ENCODE measurements at regions of chr7 and their contacts with region 1.

Region 1: DNA sequence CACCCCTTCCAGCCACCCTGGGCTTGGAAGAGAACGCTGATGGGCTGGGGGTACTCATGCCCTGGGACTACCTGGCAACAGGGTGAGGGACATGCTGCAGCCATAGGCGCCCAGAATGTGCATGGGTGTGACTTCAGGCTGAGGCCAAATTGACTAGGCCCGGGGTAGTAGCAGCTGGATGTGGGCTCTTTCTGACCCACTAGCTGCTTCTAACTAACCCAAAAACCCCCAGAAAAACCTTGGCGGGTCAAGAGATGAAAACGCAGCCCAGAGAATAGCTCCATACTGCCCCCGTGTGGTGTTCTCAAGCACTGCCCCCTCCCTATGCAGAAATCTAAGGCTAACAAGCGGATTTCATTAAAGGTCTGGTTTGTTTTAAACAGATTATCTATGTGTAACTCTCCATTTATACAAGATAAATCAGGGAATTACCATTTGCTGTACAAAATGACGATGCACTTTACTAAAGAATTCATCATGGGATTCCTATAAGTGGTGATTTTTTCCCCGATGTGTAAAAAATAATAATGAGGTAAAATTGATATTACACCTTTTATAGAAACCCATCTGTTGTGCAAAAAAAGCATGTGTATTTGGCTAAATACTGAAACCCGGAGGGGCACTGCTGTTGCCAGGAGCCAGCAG is 4.2 kb downstream of the SMARCD3 start:
- DNase-seq: peak; percentile 15
- ATAC-seq: peak; percentile 69
- H3K4me3 ChIP-seq: no peak overlapping the region; the same call in 1 of the 2 replicates
- H3K27ac ChIP-seq: no peak overlapping the region
- H3K4me1 ChIP-seq: peaks cover 16% of the 10 kb centered on the region
- H3K27me3 ChIP-seq: peaks cover 15 to 24% of the 10 kb centered on the region in 2 experiments
- CTCF ChIP-seq: peak; percentile 65 to 92 (median 90)
- EP300 ChIP-seq: no peak
- POLR2A ChIP-seq: no peak
- RAD21 ChIP-seq: peak; percentile 68

Region 2: GRCh38 chr7:151123822-151124464 is 120.4 kb before region 1 on chr7:
- CTCF ChIA-PET with region 1: interaction called, 41 read pairs
- POLR2A ChIA-PET with region 1: no interaction called
- RAD21 ChIA-PET with region 1: interaction called, 16 read pairs
- SMC1A ChIA-PET with region 1: interaction called, 10 read pairs
- in situ Hi-C with region 1: no loop called
- intact Hi-C with region 1: loop called (anchors 1 kb)
- DNase-seq: no peak
- ATAC-seq: peak; percentile 99
- H3K4me3 ChIP-seq: no peak overlapping the region
- H3K27ac ChIP-seq: no peak overlapping the region
- H3K4me1 ChIP-seq: no peaks in the 10 kb centered on the region
- H3K27me3 ChIP-seq: no peaks in the 10 kb centered on the region
- CTCF ChIP-seq: peak; percentile 99; a peak in 5 of 6 replicates
- EP300 ChIP-seq: no peak
- POLR2A ChIP-seq: no peak; the same call in 1 of the 2 replicates
- RAD21 ChIP-seq: peak; percentile 86

Region 3: DNA sequence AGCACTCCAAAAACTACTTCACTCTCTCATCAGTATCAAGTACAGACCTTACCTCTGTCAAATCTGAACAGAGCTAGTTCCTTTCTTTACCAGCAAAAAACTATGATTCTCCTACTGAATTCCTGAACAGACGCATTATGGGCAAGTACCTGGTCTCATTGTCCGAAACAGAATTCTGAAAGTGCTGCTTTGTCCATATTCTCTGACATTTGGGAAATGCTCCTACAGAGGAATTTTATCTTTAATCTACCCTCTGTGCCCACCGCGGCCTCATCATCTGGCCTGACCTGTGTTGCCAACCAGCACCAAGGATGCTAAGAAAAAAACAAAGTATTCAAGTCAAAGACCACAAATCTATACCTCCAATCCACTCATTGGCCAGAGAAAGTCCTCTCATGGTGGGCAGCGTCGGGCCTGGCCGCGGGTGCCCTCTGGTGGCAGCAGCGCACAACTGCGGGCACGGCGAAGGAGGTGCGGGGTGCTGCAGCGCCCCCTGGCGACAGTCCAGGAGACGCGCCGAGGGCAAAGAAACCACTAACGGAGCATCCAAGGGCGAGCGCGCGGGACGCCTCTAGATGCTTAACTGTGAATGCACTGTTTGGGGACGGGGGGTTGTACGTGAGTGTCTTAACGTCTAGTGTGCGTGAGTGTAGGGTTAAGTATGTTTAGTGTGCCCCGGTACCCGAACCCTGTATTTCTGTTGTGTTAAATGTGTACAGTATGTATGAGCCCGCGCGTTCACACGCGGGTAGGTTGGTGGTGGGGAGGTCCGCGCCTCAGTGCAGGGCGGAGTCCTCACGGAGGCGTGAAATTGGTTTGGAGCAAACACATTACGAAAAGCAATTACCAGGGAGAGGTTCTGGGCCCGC is 71.8 kb before region 1 on chr7:
- CTCF ChIA-PET with region 1: interaction called, 19 read pairs
- POLR2A ChIA-PET with region 1: no interaction called
- RAD21 ChIA-PET with region 1: no interaction called
- SMC1A ChIA-PET with region 1: interaction called, 3 read pairs
- in situ Hi-C with region 1: no loop called
- intact Hi-C with region 1: loop called (anchors 5 kb)
- DNase-seq: no peak
- ATAC-seq: peak; percentile 87
- H3K4me3 ChIP-seq: no peak overlapping the region
- H3K27ac ChIP-seq: no peak overlapping the region
- H3K4me1 ChIP-seq: no peaks in the 10 kb centered on the region
- H3K27me3 ChIP-seq: peaks cover 5 to 19% of the 10 kb centered on the region in 2 experiments
- CTCF ChIP-seq: peak; percentile 100; a peak in 5 of 6 replicates
- EP300 ChIP-seq: no peak
- POLR2A ChIP-seq: no peak
- RAD21 ChIP-seq: peak; percentile 75

Region 4: GRCh38 chr7:151218170-151218569 is 26.1 kb before region 1 on chr7:
- CTCF ChIA-PET with region 1: interaction called, 12 read pairs
- POLR2A ChIA-PET with region 1: no interaction called
- RAD21 ChIA-PET with region 1: no interaction called
- SMC1A ChIA-PET with region 1: interaction called, 5 read pairs
- in situ Hi-C with region 1: no loop called
- intact Hi-C with region 1: no loop called
- DNase-seq: no peak
- ATAC-seq: no peak
- H3K4me3 ChIP-seq: no peak overlapping the region
- H3K27ac ChIP-seq: no peak overlapping the region
- H3K4me1 ChIP-seq: no peaks in the 10 kb centered on the region
- H3K27me3 ChIP-seq: no peaks in the 10 kb centered on the region
- CTCF ChIP-seq: no peak
- EP300 ChIP-seq: no peak
- POLR2A ChIP-seq: no peak
- RAD21 ChIP-seq: no peak

Region 5: DNA sequence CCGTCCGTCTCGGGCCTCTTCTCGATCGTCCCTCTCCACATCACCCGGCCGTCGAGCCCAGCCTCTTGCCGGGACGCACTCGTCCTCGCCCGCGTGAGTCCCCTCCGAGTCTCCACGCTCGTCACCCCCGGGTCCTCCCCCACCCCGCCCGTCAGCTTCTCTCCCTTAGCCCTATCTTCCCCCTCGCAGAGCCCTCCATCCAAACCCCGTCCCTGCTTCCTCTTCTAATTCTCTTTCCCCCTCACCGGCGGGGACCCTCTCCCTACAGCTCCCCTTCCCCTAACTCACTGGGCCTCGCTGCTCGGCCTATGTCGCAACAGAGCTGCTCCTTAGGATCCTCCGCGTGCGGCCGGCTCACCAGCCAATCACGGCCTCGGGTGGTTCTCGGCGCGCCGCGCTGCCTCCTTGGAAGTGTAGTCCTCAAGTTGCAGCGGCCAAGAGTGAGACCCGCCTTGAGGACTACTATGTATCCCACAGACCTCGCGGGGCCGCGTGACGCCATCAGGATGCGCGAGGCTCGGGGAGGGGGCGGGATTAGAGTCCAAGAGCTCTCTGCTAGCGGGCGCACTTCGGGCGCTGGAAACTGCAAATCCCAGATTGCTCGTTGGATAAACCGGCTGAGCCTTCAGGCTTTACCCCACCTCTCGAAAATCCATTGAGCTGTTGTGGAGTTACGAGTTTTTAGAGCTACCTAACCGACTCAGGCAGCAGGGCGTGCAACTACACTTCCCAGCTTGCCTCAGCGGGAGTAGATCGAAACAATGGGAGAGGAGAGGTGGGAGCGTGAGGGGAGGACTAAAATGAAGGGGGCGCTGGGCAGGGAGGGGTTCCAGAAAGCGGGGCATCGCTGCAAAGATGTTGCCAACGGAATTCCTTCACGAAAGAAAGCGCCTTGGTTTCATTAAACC is 17.2 kb before region 1 on chr7 and contains the start of gene ABCF2:
- CTCF ChIA-PET with region 1: interaction called, 56 read pairs
- POLR2A ChIA-PET with region 1: interaction called, 5 read pairs
- RAD21 ChIA-PET with region 1: interaction called, 17 read pairs
- SMC1A ChIA-PET with region 1: interaction called, 24 read pairs
- in situ Hi-C with region 1: no loop called
- intact Hi-C with region 1: no loop called
- DNase-seq: peak; percentile 85
- ATAC-seq: peak; percentile 100
- H3K4me3 ChIP-seq: peak within 1 kb of the TSS; percentile 89
- H3K27ac ChIP-seq: peak within 1 kb of the TSS; percentile 22
- H3K4me1 ChIP-seq: no peaks in the 10 kb centered on the region
- H3K27me3 ChIP-seq: no peaks in the 10 kb centered on the region
- CTCF ChIP-seq: no peak
- EP300 ChIP-seq: no peak
- POLR2A ChIP-seq: peak; percentile 82
- RAD21 ChIP-seq: no peak
- polyA plus RNA-seq, gene ABCF2: 39.6 to 50.9 TPM

Region 6: GRCh38 chr7:151232091-151232916 is 12.0 kb before region 1 on chr7 and contains the start of gene CHPF2:
- CTCF ChIA-PET with region 1: interaction called, 56 read pairs
- POLR2A ChIA-PET with region 1: interaction called, 5 read pairs
- RAD21 ChIA-PET with region 1: interaction called, 17 read pairs
- SMC1A ChIA-PET with region 1: interaction called, 24 read pairs
- in situ Hi-C with region 1: no loop called
- intact Hi-C with region 1: no loop called
- DNase-seq: peak; percentile 60
- ATAC-seq: peak; percentile 97
- H3K4me3 ChIP-seq: peak within 1 kb of the TSS; percentile 86
- H3K27ac ChIP-seq: peak within 1 kb of the TSS; percentile 88
- H3K4me1 ChIP-seq: peaks cover 5% of the 10 kb centered on the region; the same call in 1 of the 2 replicates
- H3K27me3 ChIP-seq: no peaks in the 10 kb centered on the region
- CTCF ChIP-seq: no peak
- EP300 ChIP-seq: no peak
- POLR2A ChIP-seq: peak; percentile 98
- RAD21 ChIP-seq: no peak
- polyA plus RNA-seq, gene CHPF2: 0.23 to 0.82 TPM

Region 7: DNA sequence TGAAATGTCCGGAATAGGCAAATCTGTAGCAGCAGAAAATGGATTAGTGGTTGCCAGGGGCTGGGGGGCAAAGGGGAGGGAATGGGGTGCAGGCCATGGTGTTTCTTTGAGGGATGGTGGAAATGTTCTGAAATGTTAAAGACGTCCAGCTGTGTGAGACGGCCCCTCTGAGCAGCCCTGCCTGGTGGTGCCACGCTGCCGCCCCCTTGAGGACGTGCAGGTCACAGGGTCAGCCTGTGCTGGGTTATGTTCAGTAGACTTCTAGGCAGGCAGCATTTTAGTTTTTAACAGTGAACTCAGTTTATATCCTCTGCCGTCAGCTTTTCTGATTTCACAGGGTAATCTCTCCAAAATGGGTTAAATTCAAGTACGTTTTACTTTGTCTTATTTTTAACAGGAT is 106.7 kb after region 1 on chr7:
- CTCF ChIA-PET with region 1: interaction called, 28 read pairs
- POLR2A ChIA-PET with region 1: no interaction called
- RAD21 ChIA-PET with region 1: interaction called, 4 read pairs
- SMC1A ChIA-PET with region 1: interaction called, 9 read pairs
- in situ Hi-C with region 1: no loop called
- intact Hi-C with region 1: no loop called
- DNase-seq: no peak
- ATAC-seq: peak; percentile 76
- H3K4me3 ChIP-seq: peak overlapping the region; percentile 34; the same call in 1 of the 2 replicates
- H3K27ac ChIP-seq: peak overlapping the region; percentile 94
- H3K4me1 ChIP-seq: peaks cover 37% of the 10 kb centered on the region
- H3K27me3 ChIP-seq: no peaks in the 10 kb centered on the region
- CTCF ChIP-seq: peak; percentile 56 to 67 (median 59)
- EP300 ChIP-seq: no peak
- POLR2A ChIP-seq: no peak
- RAD21 ChIP-seq: peak; percentile 54